ENCODE measurements at regions of chr4 and their contacts with region 1.

Region 1: GRCh38 chr4:168923526-168924194 is 86.4 kb downstream of the CBR4 start:
- DNase-seq: peak; percentile 41 to 62
- ATAC-seq: peak; percentile 80

Region 2: GRCh38 chr4:168585168-168586091 is 338.2 kb before region 1 on chr4:
- intact Hi-C with region 1: loop called in 1 of 2 experiments (anchors 10 kb)
- DNase-seq: peak; percentile 72 to 77
- ATAC-seq: peak; percentile 98